Common myeloid progenitor, CD34-positive (primary cell): ENCODE measurements at regions of chr10 and their contacts with region 1.

Region 1: GRCh38 chr10:69800109-69800508 is 1.6 kb upstream of the COL13A1 start:
- DNase-seq: peak; percentile 32 to 44 (median 37)
- H3K4me3 ChIP-seq: no peak overlapping the region
- H3K27ac ChIP-seq: no peak overlapping the region
- H3K4me1 ChIP-seq: peaks cover 3 to 23% (median 19%) of the 10 kb centered on the region in 4 experiments
- H3K27me3 ChIP-seq: peaks cover 0 to 49% (median 17%) of the 10 kb centered on the region in 5 experiments

Region 2: GRCh38 chr10:69810675-69811397 is 10.7 kb after region 1 on chr10:
- CTCF ChIA-PET with region 1: interaction called, 19 read pairs
- POLR2A ChIA-PET with region 1: no interaction called
- DNase-seq: no peak
- H3K4me3 ChIP-seq: no peak overlapping the region
- H3K27ac ChIP-seq: no peak overlapping the region
- H3K4me1 ChIP-seq: no peaks in the 10 kb centered on the region
- H3K27me3 ChIP-seq: peaks cover 0 to 13% (median 0%) of the 10 kb centered on the region in 5 experiments

Region 3: GRCh38 chr10:70528726-70529362 is 728.7 kb after region 1 on chr10:
- CTCF ChIA-PET with region 1: no interaction called
- POLR2A ChIA-PET with region 1: no interaction called
- DNase-seq: peak; percentile 30 to 54 (median 36)
- H3K4me3 ChIP-seq: no peak overlapping the region
- H3K27ac ChIP-seq: no peak overlapping the region
- H3K4me1 ChIP-seq: peaks cover 0 to 21% (median 10%) of the 10 kb centered on the region in 4 experiments
- H3K27me3 ChIP-seq: no peaks in the 10 kb centered on the region